Right ventricle myocardium superior (tissue), 1 donor: ENCODE measurements at regions of chr10 and their contacts with region 1.

Region 1: DNA sequence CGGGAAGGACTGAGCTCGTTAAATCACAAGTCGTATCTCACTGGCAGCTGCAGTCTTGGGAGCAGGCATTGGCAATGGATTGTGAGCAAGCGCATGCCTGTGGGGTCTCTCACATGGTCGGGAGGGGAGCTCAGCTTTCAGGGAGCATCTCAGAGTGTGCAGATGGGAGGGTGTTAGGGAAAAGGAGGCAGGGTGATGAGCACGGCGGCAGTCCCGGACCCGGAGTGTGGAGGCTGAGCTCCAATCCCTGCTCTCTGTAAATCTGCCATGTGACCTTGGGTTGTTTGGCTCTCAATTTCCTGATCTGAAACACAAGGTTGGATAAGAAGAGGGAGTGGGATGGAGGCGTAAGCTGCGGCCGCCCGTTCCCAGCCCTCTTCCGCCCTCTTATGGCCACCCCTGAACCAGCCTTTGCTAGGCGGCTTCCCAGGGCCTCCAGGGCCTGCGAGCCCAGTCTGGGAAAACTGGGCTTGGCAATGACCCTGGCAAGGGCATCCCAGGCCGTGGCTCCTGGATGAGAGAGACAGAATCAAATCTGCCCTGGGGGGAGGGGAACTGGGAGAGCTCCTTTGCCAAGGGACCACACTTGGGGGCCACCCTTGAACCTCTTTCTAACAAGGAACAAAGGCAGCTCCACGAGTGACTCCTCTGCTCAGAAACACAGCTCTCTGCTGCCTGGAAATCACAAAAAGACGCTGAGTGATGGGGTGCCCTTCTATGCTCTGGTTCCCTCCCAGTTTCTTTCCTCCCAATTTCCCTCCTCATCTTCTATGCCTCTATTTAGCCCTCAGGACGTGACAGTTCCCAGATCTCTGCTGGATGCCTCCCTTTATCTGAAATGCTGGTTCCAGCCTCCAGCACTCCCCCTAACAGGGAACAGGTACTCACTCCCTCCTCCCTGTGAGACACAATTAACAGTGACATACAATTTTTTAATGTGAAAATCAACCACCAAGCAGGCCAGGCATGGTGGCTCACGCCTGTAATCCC is 41.7 kb upstream of the LOXL4 start:
- DNase-seq: peak; percentile 82
- ATAC-seq: peak; percentile 98

Region 2: DNA sequence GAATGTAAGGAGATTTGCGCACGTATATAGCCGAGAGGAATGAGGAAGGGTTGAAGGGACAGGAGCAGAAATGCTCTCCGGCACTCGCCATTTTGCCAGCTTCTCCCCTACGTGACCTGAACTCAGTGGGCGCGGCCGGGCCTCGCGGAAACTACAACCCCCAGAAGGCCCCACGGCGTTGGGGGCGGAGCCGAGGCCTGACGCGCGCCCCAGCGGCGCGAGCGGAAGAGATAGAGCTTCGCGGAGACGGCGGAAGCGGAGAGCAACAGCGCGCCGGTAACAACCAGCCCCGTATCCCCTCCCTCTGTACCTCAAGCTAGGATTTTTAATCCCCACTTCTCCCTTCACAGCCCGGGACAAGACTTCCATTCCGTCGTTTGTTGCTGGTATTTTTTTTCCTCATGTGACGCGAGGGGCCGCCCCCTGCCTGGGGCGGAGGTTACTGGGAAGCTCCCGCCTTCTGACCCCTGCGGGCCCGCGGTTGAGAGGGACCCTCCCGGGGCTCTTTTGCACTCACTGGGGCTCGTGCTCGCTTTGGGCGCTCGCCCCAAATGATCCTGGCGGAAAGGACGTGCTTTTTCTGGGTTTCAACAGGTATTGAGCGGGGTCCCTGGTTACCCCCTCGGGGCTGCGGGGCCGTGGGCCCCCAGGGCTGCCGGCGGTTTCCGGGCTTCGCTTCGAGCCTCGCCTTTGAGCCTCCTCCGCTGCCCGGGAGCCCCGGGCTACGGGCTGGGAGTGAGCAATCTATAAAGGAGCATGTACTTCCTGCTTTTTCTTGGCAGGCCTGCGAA is 175.0 kb before region 1 on chr10 and contains the start of gene R3HCC1L:
- intact Hi-C with region 1: no loop called
- DNase-seq: peak; percentile 96
- ATAC-seq: peak; percentile 99
- total RNA-seq, gene R3HCC1L: 4.9 TPM

Region 3: GRCh38 chr10:98170249-98171117 is 139.2 kb before region 1 on chr10:
- intact Hi-C with region 1: loop called (anchors 5 kb)
- DNase-seq: no peak
- ATAC-seq: peak; percentile 73

Region 4: GRCh38 chr10:98269072-98269912 is 40.4 kb before region 1 on chr10:
- intact Hi-C with region 1: loop called (anchors 5 kb)
- DNase-seq: peak; percentile 89
- ATAC-seq: peak; percentile 90

Region 5: DNA sequence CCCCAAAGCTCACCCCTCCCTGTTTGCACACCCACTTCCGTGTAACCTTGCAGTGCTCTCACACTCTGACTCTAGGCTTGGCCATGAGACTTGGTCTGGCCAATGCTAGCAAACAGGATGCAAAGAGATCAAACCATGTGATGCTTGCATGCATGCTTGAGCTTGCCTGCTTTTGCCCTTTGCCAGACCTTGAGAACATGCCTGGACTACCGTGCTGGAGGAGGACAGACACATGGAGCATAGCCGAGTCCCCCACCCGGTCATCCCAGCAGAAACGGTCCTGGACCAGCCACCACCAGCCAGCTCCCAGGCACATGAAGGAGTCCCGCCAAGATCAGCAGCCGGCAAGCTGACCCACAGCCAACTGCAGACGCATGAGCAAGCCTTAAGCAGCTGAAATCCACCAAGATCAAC is 81.9 kb after region 1 on chr10:
- intact Hi-C with region 1: no loop called
- DNase-seq: peak; percentile 83
- ATAC-seq: peak; percentile 73

Region 6: GRCh38 chr10:98528166-98528804 is 218.6 kb after region 1 on chr10:
- intact Hi-C with region 1: no loop called
- DNase-seq: no peak
- ATAC-seq: no peak